PC-9 (cell line): ENCODE measurements at regions of chr3 and their contacts with region 1.

Region 1: GRCh38 chr3:135918580-135918962 is 47.0 kb upstream of the PPP2R3A start:
- DNase-seq: no peak
- H3K4me3 ChIP-seq: no peak overlapping the region
- H3K27ac ChIP-seq: no peak overlapping the region
- H3K4me1 ChIP-seq: 0 out of 2 replicates have a peak, but pooled peaks cover 3% of the 10 kb centered on the region
- H3K27me3 ChIP-seq: no peaks in the 10 kb centered on the region
- CTCF ChIP-seq: peak; percentile 69

Region 2: DNA sequence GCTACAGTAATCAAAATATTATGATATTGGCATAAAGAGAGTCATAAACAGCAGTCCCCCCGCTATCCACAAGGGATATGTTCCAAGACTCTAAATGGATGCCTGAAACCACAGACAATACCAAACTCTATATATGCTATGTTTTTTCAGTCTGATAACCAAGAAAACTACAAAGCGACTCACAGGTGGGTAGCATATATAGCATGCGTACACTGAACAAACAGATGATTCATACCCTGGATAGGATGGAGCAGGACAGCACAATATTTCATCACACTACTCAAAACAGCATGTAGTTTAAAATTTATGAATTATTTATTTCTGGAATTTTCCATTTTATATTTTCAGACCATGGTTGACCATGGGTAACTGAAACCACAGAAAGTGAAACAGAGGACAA is 40.1 kb before region 1 on chr3:
- CTCF ChIA-PET with region 1: no interaction called
- POLR2A ChIA-PET with region 1: no interaction called
- intact Hi-C with region 1: no loop called
- DNase-seq: no peak
- H3K4me3 ChIP-seq: no peak overlapping the region
- H3K27ac ChIP-seq: no peak overlapping the region
- H3K4me1 ChIP-seq: no peaks in the 10 kb centered on the region
- H3K27me3 ChIP-seq: no peaks in the 10 kb centered on the region
- CTCF ChIP-seq: no peak

Region 3: DNA sequence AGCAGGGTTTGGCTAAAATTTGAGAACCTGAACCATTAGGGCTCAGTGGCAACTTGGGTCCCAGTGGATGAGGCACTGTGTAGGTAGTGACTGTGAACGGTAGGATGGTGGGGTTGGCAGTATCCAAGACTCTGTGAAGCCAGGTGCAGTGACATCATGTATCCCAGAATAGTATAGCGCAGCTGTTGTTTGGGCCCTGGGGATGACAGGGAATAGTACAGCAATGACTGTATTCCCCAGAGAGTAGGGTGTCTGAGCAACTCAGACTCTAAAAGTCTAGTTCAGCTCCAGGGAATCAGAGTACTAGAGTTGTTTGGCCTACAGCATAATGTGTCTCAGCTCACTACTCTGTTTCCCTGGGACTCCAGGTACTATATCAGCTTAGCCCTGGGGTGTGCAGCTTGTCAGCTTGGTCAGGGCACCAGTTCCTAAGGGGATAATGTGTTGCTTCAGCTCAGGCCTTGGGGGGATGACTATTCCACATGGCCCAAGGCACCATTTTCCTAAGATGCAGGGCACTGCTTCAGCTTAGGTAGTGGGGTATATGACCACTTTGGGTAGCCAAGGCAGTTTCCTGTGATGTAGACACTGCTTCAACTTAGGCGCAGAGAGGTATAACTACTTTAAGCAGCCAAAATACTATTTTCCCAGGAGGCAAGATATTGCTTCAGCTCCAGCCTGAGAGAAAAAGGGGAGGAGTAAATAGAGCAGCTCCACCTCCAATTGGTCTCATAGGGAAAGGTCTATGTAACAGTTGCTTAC is 26.4 kb after region 1 on chr3:
- CTCF ChIA-PET with region 1: no interaction called
- POLR2A ChIA-PET with region 1: no interaction called
- intact Hi-C with region 1: no loop called
- DNase-seq: no peak
- H3K4me3 ChIP-seq: no peak overlapping the region
- H3K27ac ChIP-seq: no peak overlapping the region
- H3K4me1 ChIP-seq: no peaks in the 10 kb centered on the region
- H3K27me3 ChIP-seq: no peaks in the 10 kb centered on the region
- CTCF ChIP-seq: no peak

Region 4: DNA sequence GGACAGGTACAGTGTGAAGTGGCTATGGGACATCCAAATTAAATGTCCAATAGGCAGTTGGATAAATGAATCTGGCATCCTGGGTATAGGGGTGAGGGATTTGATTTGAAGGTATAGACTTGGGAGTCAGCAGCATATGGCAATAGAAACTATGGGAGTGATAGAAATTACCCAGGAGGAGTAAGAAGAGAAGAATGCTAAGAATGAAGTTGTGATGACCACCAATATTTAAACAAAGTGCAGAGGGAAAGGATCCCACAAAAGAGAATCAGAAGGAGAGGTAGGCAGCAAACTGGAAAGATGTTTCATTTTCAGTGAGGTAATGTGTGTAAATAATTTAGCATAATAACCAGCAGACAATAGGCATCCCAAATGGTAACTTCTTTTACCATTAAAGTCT is 291.4 kb after region 1 on chr3:
- CTCF ChIA-PET with region 1: no interaction called
- POLR2A ChIA-PET with region 1: interaction called, 18 read pairs
- intact Hi-C with region 1: no loop called
- DNase-seq: peak in 1 of 2 experiments; percentile 50
- H3K4me3 ChIP-seq: no peak overlapping the region
- H3K27ac ChIP-seq: no peak overlapping the region
- H3K4me1 ChIP-seq: no peaks in the 10 kb centered on the region
- H3K27me3 ChIP-seq: no peaks in the 10 kb centered on the region
- CTCF ChIP-seq: no peak